OCI-LY7 (cell line): ENCODE measurements at regions of chr10 and their contacts with region 1.

Region 1: DNA sequence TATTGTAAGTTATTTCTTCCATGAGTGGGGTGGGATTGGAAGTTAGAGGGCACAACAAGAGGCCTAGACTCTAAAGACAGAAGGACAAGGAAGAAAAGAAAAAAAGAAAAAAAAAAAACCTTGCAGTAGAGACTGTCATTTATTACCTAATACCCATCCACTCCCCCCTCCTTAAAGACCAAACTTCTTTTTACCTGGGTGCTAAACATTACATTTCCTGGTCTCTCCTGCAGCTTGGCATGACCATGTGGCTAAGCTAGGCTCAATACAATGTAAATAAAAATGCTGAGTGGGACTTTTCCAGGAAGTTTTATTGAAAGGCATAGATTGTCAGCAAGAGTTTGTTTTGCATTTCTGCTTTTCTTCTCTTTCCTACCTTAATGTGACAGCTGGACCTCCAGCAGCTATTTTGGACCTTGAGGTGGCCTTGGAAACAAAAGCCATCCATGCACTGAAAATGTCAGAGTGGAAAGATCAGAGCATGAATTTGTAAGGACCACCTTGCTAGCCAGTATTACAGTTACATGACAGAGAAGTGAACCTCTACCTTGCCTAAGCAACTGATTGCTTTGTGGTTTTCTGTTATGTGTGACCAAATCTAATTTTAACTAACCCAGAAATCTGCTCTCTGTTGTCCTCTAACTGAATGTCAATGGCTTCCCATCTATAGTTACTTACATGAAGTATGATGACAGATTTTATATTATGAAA is 81.3 kb upstream of the SFMBT2 start:
- DNase-seq: peak; percentile 51
- H3K4me3 ChIP-seq: peak overlapping the region; percentile 17
- H3K27ac ChIP-seq: peak overlapping the region; percentile 44
- H3K4me1 ChIP-seq: peaks cover 69% of the 10 kb centered on the region
- CTCF ChIP-seq: no peak

Region 2: DNA sequence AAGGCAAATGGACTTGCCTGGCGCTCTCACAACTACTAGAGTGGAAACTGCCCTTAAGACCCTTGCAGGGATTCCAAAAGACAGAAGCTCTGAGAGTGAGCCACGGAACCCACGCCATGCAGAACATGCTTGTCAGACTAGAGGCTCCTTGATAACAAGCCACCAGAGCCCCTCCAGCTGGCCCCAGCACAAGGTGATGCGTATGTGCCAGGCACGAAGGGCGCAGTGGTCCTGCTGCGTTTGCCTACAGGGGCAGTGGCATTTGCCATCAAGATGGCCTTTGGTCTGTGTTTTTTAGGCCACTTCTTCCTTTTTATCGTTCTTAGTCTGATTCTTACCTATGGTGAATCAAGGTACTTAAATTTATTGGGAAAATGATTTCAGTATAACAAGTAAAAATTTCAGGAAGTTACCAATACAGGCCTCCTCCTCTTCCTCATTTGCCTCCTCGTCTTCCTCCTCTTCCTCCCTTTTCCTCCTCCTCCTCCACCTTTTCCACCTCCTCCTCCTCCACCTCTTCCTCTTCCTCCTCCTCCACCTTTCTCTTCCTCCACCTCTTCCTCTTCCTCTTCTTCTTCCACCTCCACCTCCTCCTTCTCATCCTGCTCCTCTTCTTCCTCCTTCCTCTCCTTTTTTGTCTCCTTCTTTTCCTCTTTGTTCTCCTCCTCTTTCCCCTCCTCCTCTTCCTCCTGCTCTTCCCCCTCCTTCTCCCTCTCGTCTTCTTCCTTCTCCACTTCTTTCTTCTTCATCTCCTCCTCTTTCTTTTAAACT is 12.9 kb after region 1 on chr10:
- CTCF ChIA-PET with region 1: no interaction called
- POLR2A ChIA-PET with region 1: interaction called, 14 read pairs
- intact Hi-C with region 1: no loop called
- DNase-seq: no peak
- H3K4me3 ChIP-seq: no peak overlapping the region
- H3K27ac ChIP-seq: no peak overlapping the region
- H3K4me1 ChIP-seq: peaks cover 25% of the 10 kb centered on the region
- CTCF ChIP-seq: no peak

Region 3: GRCh38 chr10:7622969-7623368 is 130.9 kb after region 1 on chr10:
- CTCF ChIA-PET with region 1: no interaction called
- POLR2A ChIA-PET with region 1: no interaction called
- intact Hi-C with region 1: no loop called
- DNase-seq: no peak
- H3K4me3 ChIP-seq: no peak overlapping the region
- H3K27ac ChIP-seq: no peak overlapping the region
- H3K4me1 ChIP-seq: peaks cover 7% of the 10 kb centered on the region
- CTCF ChIP-seq: peak; percentile 45; the same call in 1 of the 2 replicates